Heart left ventricle (tissue), 16 donors: ENCODE measurements at regions of chr6 and their contacts with region 1.

Region 1: GRCh38 chr6:53679446-53679933 is 13.9 kb upstream of the KLHL31 start:
- DNase-seq: no peak
- ATAC-seq: peak; percentile 64 to 81 (median 76)
- H3K4me3 ChIP-seq: no peak overlapping the region
- H3K27ac ChIP-seq: peak overlapping the region in 4 of 12 donors; percentile 10 to 51 (median 50)
- H3K4me1 ChIP-seq: peaks cover 0 to 11% (median 0%) of the 10 kb centered on the region in 12 donors
- H3K27me3 ChIP-seq: no peaks in the 10 kb centered on the region
- CTCF ChIP-seq: peak; percentile 27 to 53 (median 40)
- POLR2A ChIP-seq: no peak

Region 2: DNA sequence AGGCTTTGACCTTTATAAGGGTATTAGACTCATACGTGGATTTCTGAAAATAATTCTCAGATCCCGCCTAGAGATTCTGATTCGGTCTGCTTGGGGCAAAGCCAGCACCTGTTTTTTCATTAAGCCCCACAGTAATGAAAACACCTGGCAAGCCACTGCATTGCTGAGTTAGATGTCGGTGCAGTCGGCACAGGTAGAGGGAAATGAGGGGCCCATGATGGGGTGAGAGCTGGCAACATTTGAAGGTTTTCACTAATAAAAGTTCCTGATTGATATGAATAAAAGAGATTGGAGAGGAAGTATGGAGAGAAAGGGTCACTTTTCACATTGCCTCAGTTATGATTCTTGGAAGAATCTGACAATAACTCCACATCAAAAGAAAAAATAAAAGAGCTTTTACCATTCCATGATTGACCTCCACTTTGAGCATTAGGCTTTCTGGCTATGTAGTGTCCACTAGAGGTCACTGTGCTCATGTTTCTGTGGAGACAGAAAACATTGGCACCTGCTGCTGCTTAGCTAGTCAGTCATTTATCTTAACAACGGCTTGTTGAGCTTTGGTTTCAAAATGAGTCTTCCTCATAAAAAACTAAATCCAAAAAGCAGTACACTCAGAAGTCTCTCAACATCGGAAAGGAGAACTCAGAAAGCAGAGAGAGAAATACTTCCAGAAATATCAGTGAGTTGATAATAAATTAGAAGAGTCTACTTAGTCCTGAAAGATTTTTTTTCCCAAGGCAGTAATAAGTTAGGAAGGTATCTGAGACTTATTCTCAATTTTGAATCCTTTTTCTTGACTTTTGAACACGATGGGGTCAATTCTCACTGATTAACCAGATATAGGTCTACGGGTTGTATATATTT is 39.3 kb after region 1 on chr6:
- intact Hi-C with region 1: loop called in 1 of 10 experiments (anchors 5 kb)
- DNase-seq: peak in 3 of 5 donors; percentile 32 to 34 (median 33)
- ATAC-seq: peak in 2 of 4 donors; percentile 79 to 83
- H3K4me3 ChIP-seq: no peak overlapping the region
- H3K27ac ChIP-seq: no peak overlapping the region
- H3K4me1 ChIP-seq: peaks cover 0 to 4% (median 0%) of the 10 kb centered on the region in 12 donors
- H3K27me3 ChIP-seq: peaks cover 0 to 3% (median 0%) of the 10 kb centered on the region in 9 donors
- CTCF ChIP-seq: peak; percentile 76 to 89 (median 84)
- POLR2A ChIP-seq: no peak

Region 3: DNA sequence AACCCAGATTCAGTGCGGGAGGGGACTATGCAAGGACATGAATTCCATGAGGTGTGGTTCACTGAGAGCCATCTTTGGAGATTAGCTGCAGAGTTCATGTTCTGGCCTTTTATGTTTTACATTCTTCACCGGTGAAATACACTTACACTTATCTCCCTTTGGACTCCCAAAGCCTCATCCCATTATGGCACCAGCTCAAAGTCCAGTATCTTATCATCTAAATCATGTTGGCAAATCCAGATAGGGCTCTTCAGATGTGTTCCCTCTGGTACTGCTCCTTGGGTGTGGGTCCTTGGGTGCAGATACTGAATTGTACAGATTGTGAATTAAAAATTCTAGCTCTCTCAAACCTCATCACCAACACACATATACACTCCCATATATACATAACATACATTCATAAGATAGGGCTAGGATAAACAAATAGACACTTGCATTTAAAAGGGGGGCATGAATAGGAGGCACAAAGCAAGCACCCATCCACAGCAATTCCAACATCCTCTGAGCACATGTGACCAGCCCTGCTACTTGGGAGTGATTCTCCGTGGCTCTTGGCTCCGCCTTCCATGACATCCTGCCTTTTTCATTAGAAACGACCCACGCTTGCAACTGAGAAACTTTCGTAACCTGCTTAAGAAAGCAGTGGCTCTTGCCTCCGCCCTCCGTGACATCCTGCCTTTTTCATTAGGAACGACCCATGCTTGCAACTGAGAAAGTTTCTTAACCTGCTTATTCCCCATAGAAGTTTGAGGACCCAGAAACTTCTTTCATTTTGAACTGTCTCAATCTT is 61.7 kb after region 1 on chr6:
- intact Hi-C with region 1: no loop called
- DNase-seq: no peak
- ATAC-seq: peak in 1 of 4 donors; percentile 34
- H3K4me3 ChIP-seq: no peak overlapping the region
- H3K27ac ChIP-seq: no peak overlapping the region
- H3K4me1 ChIP-seq: no peaks in the 10 kb centered on the region
- H3K27me3 ChIP-seq: no peaks in the 10 kb centered on the region
- CTCF ChIP-seq: no peak
- POLR2A ChIP-seq: no peak

Region 4: DNA sequence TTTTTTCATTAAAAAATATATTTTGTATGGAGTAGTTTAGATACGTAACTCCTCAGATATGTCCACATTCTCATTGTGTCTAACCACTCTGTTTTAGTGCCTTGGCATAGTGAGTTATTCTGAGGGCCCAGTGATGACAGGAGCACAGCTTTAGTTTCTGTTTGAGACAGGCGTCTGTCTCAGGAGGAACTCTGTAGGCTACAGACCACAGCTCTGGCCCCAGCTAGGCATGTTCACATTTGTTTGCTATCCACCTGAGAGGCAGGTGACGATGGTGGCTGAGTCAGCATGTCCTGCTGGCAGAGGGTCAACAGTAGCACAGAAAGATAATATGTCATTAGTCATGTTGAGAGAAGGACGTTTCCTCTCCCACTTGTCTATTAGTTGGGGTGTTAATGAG is 131.6 kb after region 1 on chr6:
- intact Hi-C with region 1: no loop called
- DNase-seq: peak in 1 of 5 donors; percentile 30
- ATAC-seq: peak in 3 of 4 donors; percentile 56 to 61 (median 58)
- H3K4me3 ChIP-seq: no peak overlapping the region
- H3K27ac ChIP-seq: peak overlapping the region in 6 of 12 donors; percentile 10 to 44 (median 22)
- H3K4me1 ChIP-seq: peaks cover 0 to 31% (median 11%) of the 10 kb centered on the region in 12 donors
- H3K27me3 ChIP-seq: no peaks in the 10 kb centered on the region
- CTCF ChIP-seq: no peak
- POLR2A ChIP-seq: no peak